ENCODE measurements at regions of chr7 and their contacts with region 1.

Region 1: DNA sequence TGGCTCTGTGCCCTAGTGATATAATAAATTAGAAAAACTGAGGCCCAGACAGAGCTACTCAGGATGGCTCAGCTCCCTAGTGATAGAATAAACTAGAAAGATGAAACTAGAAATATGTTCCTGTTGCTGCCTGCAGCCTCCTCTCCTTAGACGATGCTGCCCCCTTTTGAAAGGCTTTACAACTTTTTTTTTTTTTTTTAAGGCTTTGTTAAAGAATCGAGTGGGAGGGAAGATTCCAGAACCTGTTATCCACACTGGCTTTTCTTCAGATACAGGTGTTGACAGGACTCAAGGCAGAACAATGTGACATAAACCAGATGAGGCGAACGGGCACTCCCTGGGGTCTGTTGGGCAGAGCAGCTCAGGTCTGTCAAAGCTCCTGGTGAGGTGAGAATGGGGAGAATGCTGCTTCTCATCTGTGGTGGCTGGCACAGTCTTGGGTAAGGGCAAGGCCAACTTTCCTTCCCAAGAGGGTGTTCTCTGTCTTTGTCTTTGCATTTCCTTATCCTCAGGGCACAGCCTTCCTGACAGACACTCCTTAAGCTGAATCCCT is 175.1 kb downstream of the COBL start:
- DNase-seq: no peak

Region 2: DNA sequence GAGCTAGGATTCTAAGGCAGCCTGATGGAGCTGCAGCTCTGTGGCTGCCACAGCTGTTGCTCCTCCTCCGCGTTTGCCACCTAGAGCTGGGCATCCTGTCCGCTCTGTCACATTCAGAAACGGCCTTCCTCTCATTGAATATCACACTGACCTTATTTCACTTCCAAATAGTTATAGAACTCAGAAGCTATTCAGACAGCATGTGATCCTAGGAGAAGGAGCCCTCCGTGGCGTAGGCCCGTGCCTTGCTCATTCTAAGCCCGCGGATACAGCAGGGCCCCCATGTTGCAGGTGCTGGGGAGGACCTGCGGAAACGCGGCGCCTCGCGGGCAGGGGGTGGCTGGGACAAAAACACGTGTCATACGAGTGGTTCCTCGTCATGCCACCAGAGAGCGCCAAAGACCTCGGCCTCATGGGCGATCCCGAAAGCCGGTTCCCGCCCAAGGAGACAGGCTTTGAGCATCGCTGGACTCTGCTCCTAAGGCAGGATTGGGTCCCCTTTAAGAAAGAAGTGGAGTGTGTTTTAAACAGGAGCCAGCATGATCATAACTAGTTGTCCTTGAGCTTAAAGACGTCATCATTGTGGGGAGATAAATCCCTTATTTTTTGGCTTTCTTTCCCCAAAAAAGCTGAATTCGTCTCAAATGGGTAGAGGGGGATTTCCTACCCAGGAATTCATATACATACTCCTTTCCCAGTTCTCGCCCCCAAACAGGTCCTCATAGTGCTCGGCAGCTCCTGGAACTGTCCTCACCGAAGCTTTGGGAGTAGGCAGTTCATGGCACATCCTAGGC is 673.5 kb before region 1 on chr7:
- intact Hi-C with region 1: loop called (anchors 5 kb)
- DNase-seq: peak; percentile 91

Region 3: GRCh38 chr7:50628434-50629084 is 513.0 kb before region 1 on chr7:
- intact Hi-C with region 1: loop called (anchors 10 kb)
- DNase-seq: no peak

Region 4: GRCh38 chr7:50711257-50712175 is 430.0 kb before region 1 on chr7:
- intact Hi-C with region 1: loop called (anchors 10 kb)
- DNase-seq: peak; percentile 82

Region 5: GRCh38 chr7:50793115-50793946 is 348.2 kb before region 1 on chr7:
- intact Hi-C with region 1: loop called (anchors 2 kb)
- DNase-seq: peak; percentile 86

Region 6: GRCh38 chr7:50921114-50921813 is 220.3 kb before region 1 on chr7:
- intact Hi-C with region 1: no loop called
- DNase-seq: no peak

Region 7: GRCh38 chr7:51067757-51068156 is 73.8 kb before region 1 on chr7:
- intact Hi-C with region 1: loop called (anchors 5 kb)
- DNase-seq: no peak

Region 8: GRCh38 chr7:51123322-51124029 is 18.1 kb before region 1 on chr7:
- intact Hi-C with region 1: loop called (anchors 2 kb)
- DNase-seq: no peak

Measured in cardiac septum (tissue), 1 donor.